ENCODE measurements at regions of chr2 and their contacts with region 1.

Region 1: GRCh38 chr2:64865073-64865830 is 123.9 kb upstream of the SLC1A4 start:
- DNase-seq: peak; percentile 74 to 78 (median 76)
- ATAC-seq: peak; percentile 90
- H3K4me3 ChIP-seq: peak overlapping the region; percentile 24
- H3K4me1 ChIP-seq: peaks cover 6% of the 10 kb centered on the region
- CTCF ChIP-seq: peak; percentile 81

Region 2: DNA sequence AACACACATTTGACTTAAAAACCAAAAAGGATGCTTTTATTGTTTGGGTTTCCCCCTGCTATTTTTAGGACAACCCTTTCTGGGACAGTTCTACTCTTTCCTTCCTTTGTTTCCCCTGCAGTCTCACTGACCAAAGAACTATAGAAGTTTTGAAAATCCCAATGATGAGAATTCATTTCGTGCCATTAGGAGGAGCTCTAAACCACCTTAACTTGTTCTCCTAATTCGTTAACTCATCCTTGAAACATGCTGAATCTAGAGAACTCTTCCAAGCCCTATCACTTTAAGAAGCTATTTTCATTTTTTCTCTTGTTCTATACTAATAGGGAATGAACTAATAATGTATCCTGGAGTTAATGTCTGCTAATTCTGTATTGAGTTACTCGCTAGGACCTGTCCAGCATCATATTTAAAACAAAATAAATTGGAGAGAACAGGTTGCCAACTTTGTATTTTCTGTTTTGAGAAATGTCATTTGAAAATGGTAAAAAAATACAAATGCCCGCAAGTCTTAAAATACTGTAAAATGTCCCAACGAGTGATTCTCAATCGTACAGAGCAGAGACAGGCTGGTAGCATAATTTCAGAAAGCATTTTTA is 278.3 kb before region 1 on chr2:
- intact Hi-C with region 1: loop called (anchors 5 to 10 kb)
- DNase-seq: no peak
- ATAC-seq: peak; percentile 65
- H3K4me3 ChIP-seq: no peak overlapping the region
- H3K4me1 ChIP-seq: no peaks in the 10 kb centered on the region
- CTCF ChIP-seq: no peak

Region 3: GRCh38 chr2:64609227-64609941 is 255.9 kb before region 1 on chr2:
- intact Hi-C with region 1: loop called in 1 of 2 experiments (anchors 10 kb)
- DNase-seq: peak; percentile 68 to 85 (median 81)
- ATAC-seq: peak; percentile 79
- H3K4me3 ChIP-seq: no peak overlapping the region
- H3K4me1 ChIP-seq: peaks cover 29% of the 10 kb centered on the region
- CTCF ChIP-seq: peak; percentile 65

Region 4: GRCh38 chr2:64644177-64645004 is 220.9 kb before region 1 on chr2:
- intact Hi-C with region 1: loop called (anchors 5 kb)
- DNase-seq: peak; percentile 71 to 82 (median 75)
- ATAC-seq: peak; percentile 69
- H3K4me3 ChIP-seq: no peak overlapping the region
- H3K4me1 ChIP-seq: peaks cover 10% of the 10 kb centered on the region
- CTCF ChIP-seq: no peak

Region 5: DNA sequence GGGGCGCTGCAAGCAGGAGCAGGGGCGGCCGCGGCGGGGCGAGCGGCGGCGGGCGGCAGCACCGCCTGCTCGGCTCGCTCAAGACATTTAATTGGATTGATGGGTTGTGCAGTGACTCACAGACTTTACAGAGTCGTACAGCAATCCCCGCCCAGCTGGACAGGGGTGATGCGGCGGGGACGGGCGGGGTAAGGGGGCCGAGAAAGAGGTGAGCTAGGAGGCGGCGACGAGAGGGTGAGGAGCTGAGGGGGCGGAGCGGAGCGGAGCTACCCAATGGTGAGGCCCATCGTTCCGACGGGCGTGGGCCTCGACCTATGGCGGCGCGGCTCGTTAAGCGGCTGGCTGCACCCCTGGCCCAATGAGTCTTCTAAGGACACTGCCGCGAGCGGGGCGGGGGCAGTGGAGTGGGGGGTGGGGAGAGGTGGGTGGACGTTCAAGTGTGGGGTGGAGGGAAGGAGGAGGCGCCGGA is 114.4 kb before region 1 on chr2:
- intact Hi-C with region 1: loop called in 1 of 2 experiments (anchors 10 kb)
- DNase-seq: peak in 2 of 3 donors; percentile 98 to 99
- ATAC-seq: no peak
- H3K4me3 ChIP-seq: peak overlapping the region; percentile 69
- H3K4me1 ChIP-seq: peaks cover 5% of the 10 kb centered on the region
- CTCF ChIP-seq: no peak

Region 6: DNA sequence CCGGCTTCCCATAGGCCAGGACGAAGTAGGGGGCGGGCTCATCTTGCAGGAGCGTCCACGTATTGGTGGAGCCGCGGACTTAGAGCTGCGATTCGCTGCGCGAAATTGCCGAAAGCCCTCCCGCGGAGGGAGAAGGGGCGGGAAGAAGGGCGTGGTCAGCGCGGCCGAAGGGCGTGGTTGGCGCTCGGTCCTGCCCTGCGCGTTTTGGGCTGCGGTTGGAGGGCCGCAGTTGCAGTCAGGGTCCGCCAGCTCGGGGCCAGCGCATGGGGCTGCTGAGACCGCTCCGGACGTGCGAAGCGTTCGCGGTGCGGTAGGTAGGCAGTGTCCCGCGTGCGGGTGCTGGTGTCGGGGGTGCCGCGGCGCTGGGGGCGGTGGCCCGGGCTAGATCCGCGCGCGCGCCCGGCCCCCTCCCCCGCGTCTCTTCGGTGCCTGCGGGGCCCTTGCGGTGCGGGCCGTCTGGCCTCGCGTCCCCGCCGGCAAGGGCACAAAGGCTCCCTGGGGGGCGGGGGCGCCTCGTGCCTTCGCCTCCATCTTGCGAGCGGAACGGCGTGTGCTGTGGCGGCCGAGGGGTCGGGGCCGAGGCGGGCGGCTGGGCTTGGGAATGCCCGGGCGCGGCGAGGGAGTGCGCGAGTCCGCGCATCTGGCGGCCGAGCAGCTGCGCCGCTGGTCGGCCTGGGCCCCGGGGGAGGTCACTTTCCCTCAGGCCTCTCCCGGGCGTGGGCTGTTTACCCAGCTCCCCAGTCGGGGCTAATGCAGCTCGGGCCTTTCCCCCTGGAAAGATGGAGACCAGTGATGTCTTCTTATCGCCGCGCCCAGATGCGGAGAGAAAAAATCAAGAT is 191.2 kb after region 1 on chr2 and contains the start of gene CEP68:
- intact Hi-C with region 1: no loop called
- DNase-seq: peak; percentile 97 to 98 (median 98)
- ATAC-seq: peak; percentile 97
- H3K4me3 ChIP-seq: peak within 1 kb of the TSS; percentile 71
- H3K4me1 ChIP-seq: peaks cover 31% of the 10 kb centered on the region
- CTCF ChIP-seq: no peak
- total RNA-seq, gene CEP68: 8.9 to 30.9 (median 13.2) TPM

Measured in mucosa of descending colon (tissue), 3 donors.